H1 (cell line): ENCODE measurements at regions of chr9 and their contacts with region 1.

Region 1: GRCh38 chr9:112186695-112187094 is 11.6 kb upstream of the SUSD1 start:
- DNase-seq: no peak
- H3K4me3 ChIP-seq: no peak overlapping the region
- H3K27ac ChIP-seq: no peak overlapping the region
- H3K4me1 ChIP-seq: no peaks in the 10 kb centered on the region
- H3K27me3 ChIP-seq: peaks cover 0 to 2% (median 0%) of the 10 kb centered on the region in 4 experiments; a peak in 1 of 7 replicates
- CTCF ChIP-seq: no peak
- EP300 ChIP-seq: no peak
- POLR2A ChIP-seq: no peak
- RAD21 ChIP-seq: no peak

Region 2: GRCh38 chr9:112120439-112120925 is 66.2 kb before region 1 on chr9:
- CTCF ChIA-PET with region 1: no interaction called
- POLR2A ChIA-PET with region 1: no interaction called
- DNase-seq: peak in 1 of 2 experiments; percentile 41
- H3K4me3 ChIP-seq: no peak overlapping the region
- H3K27ac ChIP-seq: no peak overlapping the region
- H3K4me1 ChIP-seq: peaks cover 0 to 11% (median 2%) of the 10 kb centered on the region in 4 experiments; a peak in 2 of 7 replicates
- H3K27me3 ChIP-seq: no peaks in the 10 kb centered on the region
- CTCF ChIP-seq: no peak
- EP300 ChIP-seq: no peak
- POLR2A ChIP-seq: no peak
- RAD21 ChIP-seq: no peak

Region 3: GRCh38 chr9:112174218-112174964 is 12.3 kb before region 1 on chr9:
- CTCF ChIA-PET with region 1: interaction called, 10 read pairs
- POLR2A ChIA-PET with region 1: interaction called, 13 read pairs
- DNase-seq: no peak
- H3K4me3 ChIP-seq: peak overlapping the region; percentile 56 to 74 (median 72)
- H3K27ac ChIP-seq: no peak overlapping the region
- H3K4me1 ChIP-seq: peaks cover 0 to 17% (median 6%) of the 10 kb centered on the region in 4 experiments; a peak in 5 of 7 replicates
- H3K27me3 ChIP-seq: peaks cover 0 to 35% (median 17%) of the 10 kb centered on the region in 4 experiments; a peak in 5 of 7 replicates
- CTCF ChIP-seq: no peak
- EP300 ChIP-seq: no peak
- POLR2A ChIP-seq: no peak
- RAD21 ChIP-seq: no peak

Region 4: DNA sequence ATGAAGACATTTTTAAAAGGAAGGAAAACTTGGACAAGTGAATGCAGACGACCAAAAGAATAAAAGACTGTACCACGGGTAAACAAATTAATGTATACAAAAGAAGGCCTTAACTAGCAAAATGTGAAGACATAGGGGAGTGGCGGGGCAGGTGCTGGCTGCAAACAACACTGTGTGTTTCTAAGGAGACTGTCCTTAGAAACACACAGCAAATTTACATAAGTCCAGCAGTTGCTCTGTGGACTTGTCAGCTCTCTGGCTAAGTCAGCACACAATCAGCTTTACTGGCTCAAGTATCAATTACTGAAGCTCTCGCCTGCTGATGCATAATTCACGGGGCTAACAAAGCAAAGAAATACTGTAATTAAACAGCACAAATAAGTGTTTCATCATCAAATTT is 121.9 kb after region 1 on chr9:
- CTCF ChIA-PET with region 1: no interaction called
- POLR2A ChIA-PET with region 1: no interaction called
- DNase-seq: no peak
- H3K4me3 ChIP-seq: no peak overlapping the region
- H3K27ac ChIP-seq: no peak overlapping the region
- H3K4me1 ChIP-seq: peaks cover 1 to 13% (median 11%) of the 10 kb centered on the region in 4 experiments; a peak in 4 of 7 replicates
- H3K27me3 ChIP-seq: no peaks in the 10 kb centered on the region
- CTCF ChIP-seq: no peak
- EP300 ChIP-seq: no peak
- POLR2A ChIP-seq: no peak
- RAD21 ChIP-seq: no peak

Region 5: DNA sequence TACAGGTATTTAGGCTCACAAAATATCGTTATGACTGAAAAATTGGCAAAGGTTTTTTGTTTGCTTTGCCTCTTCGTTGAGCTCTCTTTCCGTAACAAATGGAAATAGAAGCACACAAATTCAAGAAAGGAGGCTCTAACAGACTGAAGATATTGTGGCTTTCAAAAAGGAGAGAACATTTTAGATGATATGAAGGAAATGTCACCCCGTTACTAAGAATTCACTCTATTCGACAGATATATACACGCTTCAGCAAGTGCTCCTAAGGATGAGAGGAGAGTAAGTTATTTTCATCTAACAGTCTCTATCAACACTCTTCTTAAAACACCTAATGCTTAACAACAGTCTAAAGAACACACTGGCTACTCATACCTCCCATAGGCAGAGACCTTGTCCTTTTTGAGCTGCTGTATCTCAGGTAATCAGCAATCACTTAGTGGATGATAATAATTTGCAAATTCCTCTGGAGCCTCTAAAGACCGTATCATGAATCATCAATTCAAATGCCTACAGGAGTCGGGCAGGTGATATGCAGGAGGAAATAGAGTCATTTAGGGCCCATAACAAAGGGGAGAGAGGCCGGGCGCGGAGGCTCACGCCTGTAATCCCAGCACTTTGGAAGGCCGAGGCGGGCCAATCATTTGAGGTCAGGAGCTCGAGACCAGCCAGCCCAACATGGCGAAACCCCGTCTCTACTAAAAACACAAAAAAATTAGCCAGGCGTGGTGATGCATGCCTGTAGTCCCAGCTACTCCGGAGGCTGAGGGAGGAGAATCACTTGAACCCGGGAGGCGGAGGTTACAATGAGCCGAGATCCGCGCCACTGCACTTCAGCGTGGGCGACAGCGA is 191.9 kb after region 1 on chr9:
- CTCF ChIA-PET with region 1: no interaction called
- POLR2A ChIA-PET with region 1: no interaction called
- DNase-seq: peak in 1 of 2 experiments; percentile 10
- H3K4me3 ChIP-seq: peak overlapping the region; percentile 56 to 93 (median 82)
- H3K27ac ChIP-seq: no peak overlapping the region
- H3K4me1 ChIP-seq: no peaks in the 10 kb centered on the region; a peak in 3 of 7 replicates
- H3K27me3 ChIP-seq: no peaks in the 10 kb centered on the region
- CTCF ChIP-seq: no peak
- EP300 ChIP-seq: no peak
- POLR2A ChIP-seq: no peak
- RAD21 ChIP-seq: no peak